H1 (cell line): ENCODE measurements at regions of chr2 and their contacts with region 1.

Region 1: DNA sequence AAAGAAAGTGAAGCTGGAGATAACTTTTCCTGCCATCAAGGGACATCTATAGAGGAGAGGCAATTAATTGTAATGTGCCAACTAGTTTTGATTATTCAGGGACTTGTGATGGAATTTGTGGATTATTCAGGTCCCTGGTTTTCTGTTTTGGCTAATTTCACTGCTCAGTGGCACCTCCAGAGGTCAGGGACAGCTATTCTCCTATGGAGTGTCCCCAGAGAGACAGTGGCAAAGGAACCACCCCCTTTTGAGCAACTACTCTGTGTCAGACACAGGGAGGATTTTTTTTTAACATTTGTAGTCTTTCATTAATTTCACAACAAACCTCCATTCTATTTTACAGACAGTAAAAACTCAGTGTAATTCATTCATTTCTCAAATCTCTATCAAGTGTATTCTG is 206.0 kb upstream of the SPRED2 start:
- DNase-seq: no peak
- H3K4me3 ChIP-seq: no peak overlapping the region
- H3K27ac ChIP-seq: no peak overlapping the region
- H3K4me1 ChIP-seq: no peaks in the 10 kb centered on the region; a peak in 1 of 7 replicates
- H3K27me3 ChIP-seq: peaks cover 0 to 3% (median 3%) of the 10 kb centered on the region in 4 experiments; a peak in 2 of 7 replicates
- CTCF ChIP-seq: peak in 2 of 3 experiments; percentile 25 to 46; a peak in 2 of 4 replicates
- EP300 ChIP-seq: no peak
- POLR2A ChIP-seq: no peak
- RAD21 ChIP-seq: peak; percentile 10 to 31; a peak in 1 of 4 replicates

Region 2: DNA sequence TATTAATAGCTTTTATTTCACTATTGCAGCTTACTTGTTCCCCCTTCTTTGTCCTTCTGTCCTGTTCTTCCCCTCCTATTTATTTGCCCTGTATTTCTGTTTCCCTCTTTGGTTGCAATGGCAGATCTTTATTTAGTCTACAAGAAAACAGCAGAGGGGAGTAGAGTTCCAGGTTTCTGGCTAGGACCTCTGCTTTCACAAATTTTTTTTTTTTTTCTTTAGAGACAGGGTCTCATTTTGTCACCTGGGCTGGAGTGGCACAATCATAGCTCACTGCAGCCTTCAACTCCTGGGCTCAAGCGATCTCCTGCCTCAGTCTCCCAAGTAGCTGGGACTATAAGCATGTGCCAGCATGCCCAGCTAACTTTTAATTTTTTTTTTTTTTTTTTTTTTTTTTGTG is 17.9 kb before region 1 on chr2:
- CTCF ChIA-PET with region 1: interaction called, 19 read pairs
- POLR2A ChIA-PET with region 1: no interaction called
- DNase-seq: no peak
- H3K4me3 ChIP-seq: no peak overlapping the region
- H3K27ac ChIP-seq: no peak overlapping the region
- H3K4me1 ChIP-seq: no peaks in the 10 kb centered on the region
- H3K27me3 ChIP-seq: peaks cover 0 to 3% (median 0%) of the 10 kb centered on the region in 4 experiments; a peak in 2 of 7 replicates
- CTCF ChIP-seq: peak in 1 of 3 experiments; percentile 12; a peak in 1 of 4 replicates
- EP300 ChIP-seq: no peak
- POLR2A ChIP-seq: no peak
- RAD21 ChIP-seq: peak; percentile 56 to 59

Region 3: DNA sequence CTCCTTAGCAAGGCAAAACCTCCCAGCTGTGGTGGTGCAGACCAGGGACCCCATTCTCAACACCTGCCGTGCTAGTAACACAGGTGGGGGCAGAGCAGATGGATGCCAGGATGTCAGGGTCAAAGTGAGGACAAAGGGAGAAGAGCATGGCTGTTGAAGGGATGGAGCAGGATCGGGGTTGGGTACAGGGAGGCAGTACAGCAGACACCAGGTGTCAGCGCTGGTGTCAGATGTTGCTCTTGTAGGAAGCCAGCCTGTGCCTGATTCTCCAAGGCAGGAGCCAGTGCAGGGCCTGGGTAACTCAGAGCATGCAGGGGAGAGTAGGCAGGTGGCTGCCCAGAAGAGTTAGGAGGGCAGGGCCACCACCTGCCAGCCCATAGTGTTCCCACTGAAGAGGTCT is 16.1 kb after region 1 on chr2:
- CTCF ChIA-PET with region 1: interaction called, 28 read pairs
- POLR2A ChIA-PET with region 1: no interaction called
- DNase-seq: no peak
- H3K4me3 ChIP-seq: no peak overlapping the region
- H3K27ac ChIP-seq: no peak overlapping the region
- H3K4me1 ChIP-seq: peaks cover 0 to 3% (median 0%) of the 10 kb centered on the region in 4 experiments; a peak in 2 of 7 replicates
- H3K27me3 ChIP-seq: no peaks in the 10 kb centered on the region; a peak in 1 of 7 replicates
- CTCF ChIP-seq: no peak
- EP300 ChIP-seq: no peak
- POLR2A ChIP-seq: no peak
- RAD21 ChIP-seq: no peak

Region 4: GRCh38 chr2:65742977-65743376 is 104.5 kb after region 1 on chr2:
- CTCF ChIA-PET with region 1: no interaction called
- POLR2A ChIA-PET with region 1: no interaction called
- DNase-seq: no peak
- H3K4me3 ChIP-seq: no peak overlapping the region
- H3K27ac ChIP-seq: no peak overlapping the region
- H3K4me1 ChIP-seq: peaks cover 0 to 5% (median under 1%) of the 10 kb centered on the region in 4 experiments; a peak in 2 of 7 replicates
- H3K27me3 ChIP-seq: no peaks in the 10 kb centered on the region
- CTCF ChIP-seq: peak in 1 of 3 experiments; percentile 28; a peak in 1 of 4 replicates
- EP300 ChIP-seq: no peak
- POLR2A ChIP-seq: no peak
- RAD21 ChIP-seq: peak; percentile 18 to 24; a peak in 2 of 4 replicates

Region 5: GRCh38 chr2:65931056-65931455 is 292.6 kb after region 1 on chr2:
- CTCF ChIA-PET with region 1: no interaction called
- POLR2A ChIA-PET with region 1: no interaction called
- DNase-seq: no peak
- H3K4me3 ChIP-seq: no peak overlapping the region
- H3K27ac ChIP-seq: no peak overlapping the region
- H3K4me1 ChIP-seq: no peaks in the 10 kb centered on the region
- H3K27me3 ChIP-seq: peaks cover 0 to 1% (median 0%) of the 10 kb centered on the region in 4 experiments; a peak in 1 of 7 replicates
- CTCF ChIP-seq: no peak
- EP300 ChIP-seq: no peak
- POLR2A ChIP-seq: no peak
- RAD21 ChIP-seq: no peak